ENCODE measurements at regions of chr7 and their contacts with region 1.

Region 1: DNA sequence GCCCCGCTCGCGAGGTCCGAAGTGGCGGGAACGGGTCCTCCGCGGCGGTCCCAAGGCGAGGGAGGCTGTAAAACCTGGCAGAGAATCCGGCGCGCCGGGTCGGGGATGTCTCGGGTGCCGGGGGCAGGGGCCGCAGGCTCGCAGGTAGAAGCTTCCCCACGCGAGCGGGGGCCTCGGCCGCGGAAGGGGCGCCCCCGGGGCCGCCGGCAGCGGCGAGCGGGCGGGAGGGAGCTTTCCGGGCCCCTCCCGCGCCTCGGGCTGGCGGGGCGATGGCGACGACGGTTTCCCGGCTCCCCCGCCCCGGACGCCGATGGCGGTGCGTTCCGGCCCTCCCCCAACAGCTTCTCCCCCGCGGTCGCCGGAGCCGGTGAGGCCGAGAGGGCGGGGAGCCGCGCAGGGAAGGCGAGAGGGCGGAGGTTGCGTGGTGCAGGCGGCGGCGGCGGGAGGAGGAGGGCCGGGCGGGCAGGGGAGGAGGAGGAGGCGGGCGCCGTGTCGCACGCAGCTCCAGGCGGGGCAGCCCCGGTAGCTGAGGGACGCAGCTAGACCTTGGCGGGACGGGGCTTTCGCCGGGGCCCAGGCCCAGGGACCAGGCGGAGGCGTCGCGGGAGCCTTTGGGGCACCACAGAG is at the start of gene CUL1:
- DNase-seq: peak; percentile 81
- H3K4me3 ChIP-seq: peak within 1 kb of the TSS; percentile 64 to 95
- H3K27ac ChIP-seq: peak within 1 kb of the TSS; percentile 87 to 97
- H3K4me1 ChIP-seq: peaks cover 2% of the 10 kb centered on the region
- H3K27me3 ChIP-seq: no peaks in the 10 kb centered on the region
- CTCF ChIP-seq: no peak
- POLR2A ChIP-seq: peak; percentile 58
- total RNA-seq, gene CUL1: 39.0 to 105 TPM

Region 2: GRCh38 chr7:148385009-148385682 is 313.4 kb before region 1 on chr7:
- intact Hi-C with region 1: no loop called
- DNase-seq: peak; percentile 14
- H3K4me3 ChIP-seq: no peak overlapping the region
- H3K27ac ChIP-seq: peak overlapping the region in 1 of 2 donors; percentile 25
- H3K4me1 ChIP-seq: no peaks in the 10 kb centered on the region
- H3K27me3 ChIP-seq: no peaks in the 10 kb centered on the region
- CTCF ChIP-seq: no peak
- POLR2A ChIP-seq: no peak

Region 3: GRCh38 chr7:148395990-148396716 is 302.4 kb before region 1 on chr7:
- intact Hi-C with region 1: no loop called
- DNase-seq: no peak
- H3K4me3 ChIP-seq: no peak overlapping the region
- H3K27ac ChIP-seq: no peak overlapping the region
- H3K4me1 ChIP-seq: no peaks in the 10 kb centered on the region
- H3K27me3 ChIP-seq: no peaks in the 10 kb centered on the region
- CTCF ChIP-seq: no peak
- POLR2A ChIP-seq: no peak

Region 4: GRCh38 chr7:148940702-148941597 is 242.4 kb after region 1 on chr7:
- intact Hi-C with region 1: loop called (anchors 5 kb)
- DNase-seq: peak; percentile 69
- H3K4me3 ChIP-seq: peak overlapping the region; percentile 55 to 60
- H3K27ac ChIP-seq: peak overlapping the region; percentile 77 to 83
- H3K4me1 ChIP-seq: no peaks in the 10 kb centered on the region
- H3K27me3 ChIP-seq: no peaks in the 10 kb centered on the region
- CTCF ChIP-seq: no peak
- POLR2A ChIP-seq: peak; percentile 41

Region 5: GRCh38 chr7:148962823-148963582 is 264.5 kb after region 1 on chr7:
- intact Hi-C with region 1: loop called (anchors 10 kb)
- DNase-seq: peak; percentile 55
- H3K4me3 ChIP-seq: peak overlapping the region; percentile 35 to 42
- H3K27ac ChIP-seq: peak overlapping the region; percentile 29 to 49
- H3K4me1 ChIP-seq: no peaks in the 10 kb centered on the region
- H3K27me3 ChIP-seq: no peaks in the 10 kb centered on the region
- CTCF ChIP-seq: peak in 3 of 4 experiments; percentile 60 to 69 (median 61)
- POLR2A ChIP-seq: no peak

Region 6: DNA sequence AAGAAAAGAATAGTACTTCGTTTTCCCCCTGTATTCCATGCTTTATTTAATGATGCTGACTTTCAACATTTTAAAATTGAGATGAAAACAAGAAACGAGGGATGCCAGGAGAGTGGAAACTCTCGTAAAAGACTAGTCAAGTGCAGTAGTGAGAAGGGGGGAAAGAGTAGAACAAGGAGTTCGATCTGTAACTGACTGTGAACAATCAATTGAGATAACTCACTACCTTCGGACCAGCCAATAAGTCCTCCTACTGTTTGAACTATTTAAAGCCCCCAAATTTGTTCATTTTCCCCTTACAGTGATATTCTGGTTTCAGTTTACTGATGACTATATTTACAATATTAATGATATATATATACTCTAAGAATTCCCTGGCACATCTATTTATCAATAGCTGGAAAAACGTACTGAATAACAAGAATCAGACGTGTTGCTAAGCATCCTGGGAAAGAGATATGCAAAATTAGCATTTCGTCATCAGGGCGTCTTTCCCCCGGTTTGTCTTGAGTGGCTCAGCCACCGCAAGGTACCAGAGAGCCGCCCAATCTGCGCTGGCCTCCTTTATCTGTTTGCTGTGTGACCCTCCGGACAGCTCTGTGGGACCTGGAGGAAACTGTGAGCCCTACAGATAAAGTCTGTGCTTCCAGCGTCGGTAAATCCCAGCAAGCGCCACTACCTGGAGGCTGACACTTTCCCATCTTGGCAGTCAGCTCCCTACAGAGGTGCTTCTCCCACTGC is 288.7 kb after region 1 on chr7:
- intact Hi-C with region 1: loop called (anchors 5 kb)
- DNase-seq: peak; percentile 89
- H3K4me3 ChIP-seq: peak overlapping the region; percentile 44
- H3K27ac ChIP-seq: peak overlapping the region; percentile 77 to 86
- H3K4me1 ChIP-seq: peaks cover 7% of the 10 kb centered on the region
- H3K27me3 ChIP-seq: no peaks in the 10 kb centered on the region
- CTCF ChIP-seq: peak in 1 of 4 experiments; percentile 18
- POLR2A ChIP-seq: peak; percentile 48

Measured in prostate gland (tissue), 2 donors.